Right ventricle myocardium inferior (tissue), 1 donor: ENCODE measurements at regions of chr7 and their contacts with region 1.

Region 1: DNA sequence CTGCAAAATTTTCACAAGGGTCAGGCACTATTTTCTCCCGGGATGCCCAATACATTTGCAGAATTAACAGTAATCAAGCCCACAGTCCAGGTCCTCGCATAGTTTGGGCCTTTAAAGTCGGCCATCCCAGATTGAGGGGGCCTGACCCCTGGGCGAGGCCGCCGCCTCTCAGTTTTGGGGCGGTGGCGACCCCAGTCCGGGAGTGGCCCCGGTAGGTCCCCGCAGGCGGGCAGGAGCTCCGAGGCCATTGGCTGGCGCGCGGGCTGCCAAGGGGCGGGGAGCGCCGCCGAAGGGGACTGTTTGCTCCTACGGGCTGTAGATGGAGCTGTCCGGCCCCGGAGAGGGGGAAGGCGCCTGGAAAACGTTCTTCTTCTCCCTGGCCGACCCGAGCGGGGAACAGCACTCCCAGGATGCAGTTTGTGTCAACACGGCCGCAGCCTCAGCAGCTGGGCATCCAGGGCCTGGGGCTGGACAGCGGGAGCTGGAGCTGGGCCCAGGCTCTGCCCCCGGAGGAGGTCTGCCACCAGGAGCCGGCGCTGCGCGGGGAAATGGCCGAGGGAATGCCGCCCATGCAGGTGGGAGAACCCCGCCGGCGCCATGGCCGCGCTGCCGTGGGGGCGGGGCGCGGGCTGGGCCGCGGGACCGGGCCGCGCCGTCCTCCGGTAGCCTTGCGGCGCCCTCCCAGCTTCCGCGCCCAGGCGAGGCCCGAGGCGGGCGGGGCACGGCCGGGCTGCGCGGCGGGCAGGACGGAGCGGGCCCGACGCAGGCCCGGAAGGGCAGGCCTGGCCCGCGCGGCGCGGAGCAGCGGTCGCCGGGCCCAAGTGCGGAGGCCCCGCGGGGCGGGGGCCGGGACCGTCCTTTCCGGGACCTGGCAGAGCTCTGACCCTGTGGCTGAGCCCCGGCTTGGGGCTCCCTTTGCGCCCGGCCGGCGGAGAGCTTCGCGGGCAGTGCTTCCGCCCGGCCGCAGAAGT is at the start of gene ZNF282:
- DNase-seq: peak; percentile 94
- ATAC-seq: peak; percentile 98
- total RNA-seq, gene ZNF282: 13.2 TPM

Region 2: DNA sequence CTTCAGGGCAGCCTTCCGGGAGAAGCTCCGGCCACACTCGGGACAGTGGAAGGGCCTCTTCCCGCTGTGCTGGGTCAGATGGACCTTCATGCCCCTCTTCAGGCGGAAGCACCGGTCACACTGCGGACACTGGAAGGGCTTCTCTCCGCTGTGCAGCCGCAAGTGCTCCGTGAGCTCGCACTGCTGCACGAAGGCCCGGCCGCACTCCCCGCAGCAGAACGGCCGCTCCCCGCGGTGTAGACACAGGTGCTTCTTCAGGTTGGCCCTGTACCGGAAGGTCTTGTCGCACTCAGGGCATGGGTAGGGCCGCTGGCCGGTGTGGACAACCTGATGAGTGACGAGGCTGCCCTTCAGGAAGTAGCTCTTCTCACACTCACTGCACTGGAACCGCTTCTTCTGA is 90.7 kb before region 1 on chr7:
- intact Hi-C with region 1: no loop called
- DNase-seq: peak; percentile 73
- ATAC-seq: no peak

Region 3: DNA sequence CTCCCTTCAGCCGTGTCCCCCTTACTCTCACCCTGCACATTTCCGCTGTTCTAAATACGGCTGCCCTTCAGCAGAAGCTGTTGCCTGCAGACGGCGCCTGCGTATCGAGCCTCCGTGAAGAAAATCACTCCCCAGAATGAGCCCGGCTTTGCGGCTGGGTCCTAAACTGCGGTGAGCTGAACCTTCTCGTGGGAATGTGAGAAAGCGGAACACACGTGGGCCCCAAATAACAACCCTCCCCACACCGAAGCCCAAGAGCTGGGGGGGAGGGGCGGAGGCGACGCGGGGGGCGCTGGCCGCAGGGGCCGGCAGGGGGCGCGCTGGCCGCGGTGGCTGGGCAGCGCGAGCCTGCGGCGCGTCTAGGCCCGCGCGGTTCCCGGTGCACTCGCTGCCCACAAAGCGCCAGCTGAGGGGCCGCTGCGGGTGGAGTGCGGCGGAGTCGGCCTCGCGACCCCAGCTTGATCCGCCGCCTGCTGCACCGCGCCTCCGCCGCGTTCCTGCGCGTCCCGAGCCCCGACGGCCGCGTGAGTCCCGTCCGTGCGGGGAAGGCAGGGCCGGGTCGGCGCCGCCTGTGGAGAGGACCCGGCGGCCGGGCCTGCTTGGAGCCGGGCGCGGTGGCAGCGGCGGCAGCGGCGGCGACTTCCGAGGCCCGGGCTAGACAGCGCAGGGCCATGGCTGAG is 48.3 kb before region 1 on chr7 and contains the start of gene ZNF398:
- intact Hi-C with region 1: loop called (anchors 5 kb)
- DNase-seq: peak; percentile 89
- ATAC-seq: peak; percentile 93
- total RNA-seq, gene ZNF398: 7.0 TPM

Region 4: DNA sequence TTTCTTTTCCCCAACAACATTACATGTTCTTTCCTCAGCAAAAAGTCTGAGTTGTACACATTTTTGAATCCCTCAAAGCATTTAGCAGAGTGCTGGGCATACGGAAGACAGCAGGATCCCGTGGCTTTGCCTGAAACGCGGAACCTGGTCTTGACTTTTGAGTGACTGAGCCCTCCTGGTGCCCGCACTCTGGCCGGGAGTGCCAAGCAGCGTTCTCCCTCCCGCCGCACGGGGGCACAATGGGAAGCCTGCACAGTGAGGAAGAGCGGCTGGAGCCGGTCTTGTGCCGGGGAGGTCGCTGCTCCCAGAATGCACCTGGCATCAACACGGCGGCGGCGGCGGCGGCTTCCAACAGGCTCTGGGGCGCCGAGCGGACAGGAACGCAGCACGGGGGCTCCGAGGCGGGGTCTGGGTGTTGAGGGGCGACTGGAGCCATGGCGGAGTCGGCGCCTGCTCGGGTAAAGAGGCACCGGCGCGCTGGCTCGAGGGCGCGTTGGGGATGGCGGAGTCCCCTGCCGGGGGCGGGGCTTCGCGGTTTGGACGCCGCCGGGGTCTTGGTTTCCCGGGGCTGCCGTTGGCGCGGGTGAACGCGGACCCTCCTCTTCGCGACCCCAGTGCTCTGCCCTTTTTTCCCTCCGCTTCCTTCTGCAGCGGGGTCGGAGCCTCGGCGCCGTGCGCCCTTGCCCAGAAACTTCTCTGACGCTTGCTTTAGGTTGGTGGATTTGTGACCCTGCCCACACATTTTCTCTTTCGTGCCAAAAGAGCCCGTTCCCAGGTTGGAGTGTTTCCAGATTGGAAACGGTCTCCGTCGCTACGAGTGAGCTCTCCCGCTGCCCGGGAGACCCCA is 44.1 kb after region 1 on chr7 and contains the start of gene ZNF212:
- intact Hi-C with region 1: loop called (anchors 5 kb)
- DNase-seq: peak; percentile 96
- ATAC-seq: peak; percentile 100
- total RNA-seq, gene ZNF212: 4.8 TPM